ENCODE measurements at regions of chr9 and their contacts with region 1.

Region 1: DNA sequence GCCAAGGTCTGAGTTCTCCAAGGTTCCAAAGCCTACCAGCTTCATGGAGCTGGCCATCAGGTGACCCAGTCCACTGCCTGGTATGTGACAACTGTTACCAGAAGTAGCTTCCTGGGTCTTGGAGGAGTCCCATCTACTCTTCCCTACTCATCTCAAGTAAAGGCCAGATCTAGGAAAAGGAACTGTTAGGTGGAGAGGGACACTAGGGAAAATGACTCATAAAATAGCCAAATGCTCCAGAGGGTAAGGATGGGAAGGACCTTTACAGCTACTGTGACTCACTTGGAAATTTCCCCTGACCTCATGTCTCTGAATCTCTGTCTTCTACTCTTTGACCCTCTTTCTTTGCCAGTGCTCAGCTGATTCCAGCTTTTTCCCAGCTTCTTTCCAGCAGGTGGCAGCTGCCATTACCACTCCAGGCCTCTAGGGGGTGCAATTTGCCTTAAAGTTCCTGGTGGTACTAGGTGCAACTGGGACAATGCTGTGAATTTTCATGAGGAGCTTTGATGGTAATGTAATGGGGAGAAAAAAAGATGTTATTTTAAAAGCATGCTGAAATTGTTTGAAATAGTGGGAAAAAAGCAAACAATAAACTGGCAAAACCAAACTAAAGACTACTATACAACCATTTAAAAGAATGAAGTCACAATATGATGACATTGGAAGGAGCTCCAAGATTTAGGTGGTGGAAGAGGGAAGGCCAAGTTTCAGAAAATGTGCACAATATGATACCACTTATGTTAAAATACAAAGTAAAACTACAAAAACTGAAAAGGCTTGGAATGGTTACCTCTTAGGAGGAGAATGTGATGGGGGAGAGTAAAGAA is 27.1 kb upstream of the MYORG start:
- DNase-seq: peak; percentile 82
- ATAC-seq: peak; percentile 43
- H3K4me3 Mint-ChIP-seq: no peak overlapping the region
- H3K27ac Mint-ChIP-seq: no peak overlapping the region
- H3K4me1 Mint-ChIP-seq: no peaks in the 10 kb centered on the region
- H3K27me3 Mint-ChIP-seq: no peaks in the 10 kb centered on the region
- CTCF ChIP-seq: peak; percentile 98

Region 2: DNA sequence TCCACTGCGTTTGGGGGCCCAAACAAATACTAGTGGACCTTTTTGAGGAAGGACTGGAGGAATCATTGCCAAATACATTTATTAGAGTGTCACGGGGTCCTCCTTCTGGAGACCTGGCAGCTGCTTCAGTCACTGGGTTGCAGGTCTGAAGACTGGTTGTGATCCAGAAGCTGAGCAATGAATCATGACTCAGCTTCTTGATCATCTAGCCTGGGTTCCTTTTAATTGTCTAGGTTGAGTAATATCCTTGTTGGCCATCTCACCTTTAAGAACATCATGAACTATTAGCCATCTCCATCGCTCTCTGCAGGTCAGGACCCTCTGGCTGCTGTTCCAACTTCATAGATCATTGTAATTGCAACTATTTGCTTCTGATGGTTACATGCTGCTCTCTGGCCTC is 240.3 kb before region 1 on chr9:
- CTCF ChIA-PET with region 1: no interaction called
- POLR2A ChIA-PET with region 1: no interaction called
- DNase-seq: no peak
- ATAC-seq: no peak
- H3K4me3 Mint-ChIP-seq: no peak overlapping the region
- H3K27ac Mint-ChIP-seq: no peak overlapping the region
- H3K4me1 Mint-ChIP-seq: no peaks in the 10 kb centered on the region
- H3K27me3 Mint-ChIP-seq: no peaks in the 10 kb centered on the region; the same call in 1 of the 2 replicates
- CTCF ChIP-seq: no peak

Region 3: DNA sequence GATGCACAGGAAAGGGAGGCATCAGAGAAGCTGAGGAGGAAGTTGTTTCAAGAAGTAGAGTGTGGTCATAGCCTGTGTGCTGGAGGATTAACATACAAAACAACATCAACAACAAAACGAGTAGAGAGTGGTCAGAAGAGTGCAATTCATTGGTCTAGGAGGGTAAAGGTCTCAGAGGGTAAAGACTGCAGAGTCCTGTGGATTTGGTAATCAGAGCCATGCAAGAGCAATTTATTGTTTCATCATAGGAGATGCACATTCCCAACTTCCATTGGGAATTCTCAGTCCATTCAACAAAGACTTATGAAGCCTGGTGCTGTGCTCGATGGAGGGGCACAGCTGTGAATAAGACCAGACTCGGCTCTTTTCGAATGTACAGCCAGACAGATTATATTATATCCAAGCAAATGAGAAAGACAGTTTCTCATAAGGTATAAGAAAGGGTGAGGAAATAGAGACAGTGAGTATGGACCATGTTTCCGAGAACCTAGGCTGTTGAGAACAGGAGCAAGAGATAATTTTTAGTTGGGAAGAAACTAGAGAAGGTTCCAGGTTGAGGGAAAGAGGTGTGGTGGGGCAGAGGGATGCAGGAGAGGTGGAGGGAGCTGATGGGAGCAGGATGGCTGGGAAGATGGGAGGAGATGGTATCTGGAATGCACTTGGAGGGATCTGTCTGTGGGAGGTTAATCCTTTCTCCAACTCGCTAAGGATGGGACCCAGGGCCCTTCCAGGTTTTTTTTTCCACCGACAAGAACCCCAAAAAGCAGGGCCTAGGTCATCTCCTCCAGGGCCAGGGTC is 19.2 kb before region 1 on chr9:
- CTCF ChIA-PET with region 1: interaction called, 20 read pairs
- POLR2A ChIA-PET with region 1: no interaction called
- DNase-seq: no peak
- ATAC-seq: no peak
- H3K4me3 Mint-ChIP-seq: no peak overlapping the region
- H3K27ac Mint-ChIP-seq: no peak overlapping the region
- H3K4me1 Mint-ChIP-seq: peaks cover 11% of the 10 kb centered on the region
- H3K27me3 Mint-ChIP-seq: peaks cover 53% of the 10 kb centered on the region
- CTCF ChIP-seq: no peak

Region 4: GRCh38 chr9:34443533-34443932 is 39.8 kb after region 1 on chr9:
- CTCF ChIA-PET with region 1: interaction called, 17 read pairs
- POLR2A ChIA-PET with region 1: no interaction called
- DNase-seq: no peak
- ATAC-seq: peak; percentile 73
- H3K4me3 Mint-ChIP-seq: no peak overlapping the region
- H3K27ac Mint-ChIP-seq: peak overlapping the region; percentile 47; the same call in 1 of the 2 replicates
- H3K4me1 Mint-ChIP-seq: peaks cover 20% of the 10 kb centered on the region
- H3K27me3 Mint-ChIP-seq: no peaks in the 10 kb centered on the region
- CTCF ChIP-seq: no peak

Region 5: GRCh38 chr9:34493972-34494535 is 90.3 kb after region 1 on chr9:
- CTCF ChIA-PET with region 1: interaction called, 27 read pairs
- POLR2A ChIA-PET with region 1: no interaction called
- DNase-seq: peak; percentile 78
- ATAC-seq: peak; percentile 76
- H3K4me3 Mint-ChIP-seq: no peak overlapping the region
- H3K27ac Mint-ChIP-seq: no peak overlapping the region
- H3K4me1 Mint-ChIP-seq: peaks cover 4% of the 10 kb centered on the region; the same call in 1 of the 2 replicates
- H3K27me3 Mint-ChIP-seq: no peaks in the 10 kb centered on the region
- CTCF ChIP-seq: no peak

Region 6: GRCh38 chr9:34546834-34547827 is 143.4 kb after region 1 on chr9:
- CTCF ChIA-PET with region 1: interaction called, 24 read pairs
- POLR2A ChIA-PET with region 1: no interaction called
- DNase-seq: peak; percentile 91
- ATAC-seq: peak; percentile 75
- H3K4me3 Mint-ChIP-seq: no peak overlapping the region
- H3K27ac Mint-ChIP-seq: no peak overlapping the region; the same call in 1 of the 2 replicates
- H3K4me1 Mint-ChIP-seq: peaks cover 2% of the 10 kb centered on the region; the same call in 1 of the 2 replicates
- H3K27me3 Mint-ChIP-seq: no peaks in the 10 kb centered on the region; the same call in 1 of the 2 replicates
- CTCF ChIP-seq: peak; percentile 93

Region 7: DNA sequence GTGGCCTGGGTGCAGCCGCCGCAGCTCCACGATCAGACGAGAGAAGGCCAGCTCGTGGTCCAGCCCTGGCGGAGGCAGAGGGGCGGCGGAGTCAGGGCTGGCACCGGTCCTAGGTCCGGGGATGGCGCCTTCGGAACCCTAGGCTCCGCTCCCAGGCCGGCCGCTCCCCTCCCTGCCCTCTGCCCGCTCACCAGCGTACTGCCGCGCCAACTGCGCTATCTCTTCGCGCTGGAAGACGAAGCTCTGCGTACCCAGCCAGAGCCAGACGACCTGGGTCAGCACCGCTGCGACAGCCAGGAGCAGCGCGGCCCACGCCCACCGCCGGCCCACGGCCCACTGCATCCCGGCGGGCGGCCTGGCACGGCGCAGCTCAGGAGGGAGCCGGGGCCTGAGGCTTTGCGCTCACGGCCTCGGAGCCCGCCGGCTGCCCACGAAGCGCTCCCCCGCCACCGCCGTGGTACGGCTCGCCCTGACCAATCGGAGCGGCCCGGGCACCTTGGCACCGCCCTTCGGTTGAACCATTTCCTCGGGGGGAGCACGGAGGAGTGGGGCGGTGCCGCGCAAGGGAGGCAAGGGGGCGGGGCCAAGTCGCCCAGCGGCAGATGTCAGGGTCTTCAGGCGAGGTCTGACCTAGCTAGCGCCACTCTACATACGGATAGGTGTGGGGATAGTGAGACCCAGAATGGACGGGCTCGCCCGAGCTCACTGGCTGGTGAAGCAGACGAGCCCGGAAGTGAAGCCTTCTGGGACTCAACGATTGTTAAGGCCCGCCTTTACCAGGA is 233.8 kb after region 1 on chr9 and contains the start of gene SIGMAR1:
- CTCF ChIA-PET with region 1: interaction called, 11 read pairs
- POLR2A ChIA-PET with region 1: no interaction called
- DNase-seq: peak; percentile 95
- ATAC-seq: peak; percentile 89
- H3K4me3 Mint-ChIP-seq: peak within 1 kb of the TSS; percentile 83
- H3K27ac Mint-ChIP-seq: peak within 1 kb of the TSS; percentile 3
- H3K4me1 Mint-ChIP-seq: peaks cover 22% of the 10 kb centered on the region
- H3K27me3 Mint-ChIP-seq: peaks cover 11% of the 10 kb centered on the region
- CTCF ChIP-seq: no peak
- total RNA-seq, gene SIGMAR1: 108 to 116 TPM (median 109 TPM) in 3 replicates

Measured in WTC11 (cell line).